Breast epithelium (tissue), 4 donors: ENCODE measurements at regions of chr3 and their contacts with region 1.

Region 1: DNA sequence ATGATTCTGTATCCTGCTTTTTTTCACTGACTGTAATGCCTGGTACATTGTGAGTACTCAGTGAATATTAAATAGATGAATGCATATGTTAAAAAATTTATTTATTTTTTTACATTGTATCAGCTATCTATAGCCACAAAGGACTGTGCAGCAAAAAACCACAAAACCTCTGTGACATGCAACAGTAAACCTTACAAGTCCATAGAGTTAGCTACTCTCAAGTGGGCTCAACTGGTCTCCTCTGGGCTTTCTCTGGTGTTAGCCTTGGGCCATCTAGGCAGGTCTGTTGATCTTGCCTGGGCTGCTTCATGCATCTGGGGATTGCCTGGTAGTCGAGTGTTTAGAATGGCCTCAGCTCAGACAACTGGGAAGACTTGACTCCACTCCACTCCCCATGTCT is 35.3 kb downstream of the OTOL1 start:
- DNase-seq: no peak
- H3K4me3 ChIP-seq: no peak overlapping the region
- H3K27ac ChIP-seq: no peak overlapping the region
- H3K4me1 ChIP-seq: no peaks in the 10 kb centered on the region
- H3K27me3 ChIP-seq: no peaks in the 10 kb centered on the region
- CTCF ChIP-seq: no peak
- POLR2A ChIP-seq: no peak

Region 2: DNA sequence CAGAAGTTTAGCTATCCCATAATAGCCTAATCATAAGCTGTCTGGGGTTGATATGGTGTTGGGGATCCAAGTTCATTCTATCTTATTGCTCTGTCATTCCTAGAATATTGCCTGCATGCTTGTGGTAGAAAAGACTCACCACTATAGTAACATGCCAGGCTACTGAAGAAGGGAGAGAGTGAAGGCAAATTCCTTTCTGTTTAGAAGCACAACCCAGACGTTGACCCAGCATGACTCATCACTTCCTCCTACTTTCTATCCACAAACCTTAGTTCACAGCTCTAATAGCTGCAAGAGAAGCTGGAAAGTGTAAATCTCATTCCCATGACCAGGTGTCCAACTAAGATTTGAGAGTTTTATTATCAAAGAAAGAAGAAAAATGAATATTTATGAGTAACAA is 368.6 kb before region 1 on chr3:
- intact Hi-C with region 1: no loop called
- DNase-seq: no peak
- H3K4me3 ChIP-seq: no peak overlapping the region
- H3K27ac ChIP-seq: no peak overlapping the region
- H3K4me1 ChIP-seq: no peaks in the 10 kb centered on the region
- H3K27me3 ChIP-seq: no peaks in the 10 kb centered on the region
- CTCF ChIP-seq: no peak
- POLR2A ChIP-seq: no peak

Region 3: DNA sequence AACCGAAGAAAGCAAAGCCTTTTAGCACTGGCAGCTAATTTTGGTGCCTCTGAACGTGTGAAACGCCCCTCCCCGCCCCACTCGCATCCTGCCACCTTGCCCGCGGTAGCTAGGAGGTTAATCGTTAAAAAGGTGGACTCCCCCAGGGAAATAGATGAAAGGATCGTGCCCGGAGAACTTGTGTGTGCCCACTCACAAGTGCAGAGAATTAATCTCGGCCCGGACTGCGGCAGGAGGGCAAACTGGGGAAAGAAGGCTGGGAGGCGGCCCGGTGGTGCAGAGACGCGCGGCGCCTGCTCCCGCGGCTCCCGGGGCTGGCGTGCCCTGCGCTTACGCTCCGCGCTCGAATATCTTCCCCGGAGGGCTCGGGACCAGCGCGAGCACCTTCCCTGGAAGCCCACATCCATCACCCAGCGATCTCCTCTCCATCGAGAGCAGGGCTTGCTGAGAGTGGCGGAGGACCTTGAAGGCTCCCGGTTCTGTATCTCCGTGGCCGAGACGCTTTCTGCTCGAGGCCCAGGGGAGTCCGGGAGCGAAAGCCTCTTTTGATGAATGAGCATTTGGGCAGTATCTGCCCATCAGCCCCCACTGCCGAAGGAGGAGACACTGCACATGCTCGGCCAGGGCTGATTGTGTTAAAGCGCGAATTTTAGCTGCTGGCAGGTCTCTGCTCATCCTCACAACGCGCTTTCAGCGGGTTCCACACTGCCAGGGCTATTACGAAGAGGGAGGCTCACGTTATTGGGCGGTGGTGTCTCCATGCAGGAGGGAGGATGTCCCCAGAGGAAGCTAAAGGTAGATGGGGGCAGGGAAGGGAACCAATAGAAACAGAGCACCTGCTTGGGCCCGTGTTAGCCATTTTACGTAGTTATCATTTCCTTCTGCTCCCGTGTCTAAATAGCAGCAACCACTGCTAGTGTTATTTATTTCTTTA is 159.3 kb before region 1 on chr3:
- intact Hi-C with region 1: no loop called
- DNase-seq: no peak
- H3K4me3 ChIP-seq: peak overlapping the region; percentile 41 to 79 (median 56)
- H3K27ac ChIP-seq: peak overlapping the region; percentile 69 to 81
- H3K4me1 ChIP-seq: peaks cover 0 to 4% of the 10 kb centered on the region in 2 donors
- H3K27me3 ChIP-seq: no peaks in the 10 kb centered on the region
- CTCF ChIP-seq: no peak
- POLR2A ChIP-seq: no peak

Region 4: DNA sequence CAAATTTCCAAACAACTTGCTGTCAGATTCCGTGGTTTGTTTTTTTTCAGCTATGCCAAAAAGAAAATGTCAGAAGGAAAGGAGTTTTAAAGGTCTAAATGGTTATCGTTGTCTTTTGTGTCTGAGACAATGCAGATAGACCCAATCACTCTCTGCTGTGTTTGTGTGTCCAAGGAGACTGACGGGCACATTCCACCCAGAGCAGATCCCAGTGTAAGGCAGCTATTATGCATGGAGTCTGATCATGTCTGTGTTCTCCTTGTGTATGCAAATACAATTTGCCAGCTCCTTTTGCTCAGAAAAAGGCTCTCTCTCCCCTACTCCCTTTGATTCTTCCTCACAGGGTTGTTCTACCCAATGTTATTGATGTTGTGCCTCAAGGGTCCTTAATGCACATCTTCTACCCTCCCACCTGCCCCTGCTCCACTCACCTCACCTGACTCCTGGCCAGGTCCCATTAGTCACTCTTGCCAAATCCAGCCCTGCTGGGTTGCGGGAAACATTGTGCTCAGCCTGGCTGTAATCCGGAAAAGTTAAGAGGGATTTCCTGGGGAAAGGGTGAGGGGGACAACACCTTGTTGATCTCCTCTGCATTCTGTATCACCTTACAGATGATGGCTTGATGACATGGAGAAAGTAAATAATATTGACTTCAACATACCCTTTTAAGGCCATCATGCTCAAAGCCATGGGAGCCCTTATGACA is 25.7 kb after region 1 on chr3:
- intact Hi-C with region 1: loop called (anchors 2 kb)
- DNase-seq: no peak
- H3K4me3 ChIP-seq: no peak overlapping the region
- H3K27ac ChIP-seq: no peak overlapping the region
- H3K4me1 ChIP-seq: no peaks in the 10 kb centered on the region
- H3K27me3 ChIP-seq: peaks cover 0 to 11% of the 10 kb centered on the region in 2 donors
- CTCF ChIP-seq: no peak
- POLR2A ChIP-seq: no peak